Activated CD8-positive, alpha-beta T cell treated with anti-CD3 and anti-CD28 coated beads, Interleukin-2, amount 10 ng/mL, durations not matched to agents 7 days and 5 days (primary cell): ENCODE measurements at regions of chr3 and their contacts with region 1.

Region 1: GRCh38 chr3:187745201-187746058 is at the start of gene BCL6:
- DNase-seq: peak; percentile 94
- ATAC-seq: peak; percentile 42
- H3K4me3 Mint-ChIP-seq: peak within 1 kb of the TSS; percentile 100
- H3K27ac Mint-ChIP-seq: peak within 1 kb of the TSS; percentile 100
- H3K4me1 Mint-ChIP-seq: peaks cover 55% of the 10 kb centered on the region
- H3K27me3 Mint-ChIP-seq: no peaks in the 10 kb centered on the region
- total RNA-seq, gene BCL6: 11.8 to 12.6 TPM

Region 2: GRCh38 chr3:187958432-187959003 is 213.1 kb after region 1 on chr3:
- CTCF ChIA-PET with region 1: interaction called, 13 read pairs
- POLR2A ChIA-PET with region 1: interaction called, 14 read pairs
- DNase-seq: peak; percentile 78
- ATAC-seq: peak; percentile 95
- H3K4me3 Mint-ChIP-seq: peak overlapping the region; percentile 52
- H3K27ac Mint-ChIP-seq: peak overlapping the region; percentile 82
- H3K4me1 Mint-ChIP-seq: peaks cover 59% of the 10 kb centered on the region
- H3K27me3 Mint-ChIP-seq: no peaks in the 10 kb centered on the region

Region 3: DNA sequence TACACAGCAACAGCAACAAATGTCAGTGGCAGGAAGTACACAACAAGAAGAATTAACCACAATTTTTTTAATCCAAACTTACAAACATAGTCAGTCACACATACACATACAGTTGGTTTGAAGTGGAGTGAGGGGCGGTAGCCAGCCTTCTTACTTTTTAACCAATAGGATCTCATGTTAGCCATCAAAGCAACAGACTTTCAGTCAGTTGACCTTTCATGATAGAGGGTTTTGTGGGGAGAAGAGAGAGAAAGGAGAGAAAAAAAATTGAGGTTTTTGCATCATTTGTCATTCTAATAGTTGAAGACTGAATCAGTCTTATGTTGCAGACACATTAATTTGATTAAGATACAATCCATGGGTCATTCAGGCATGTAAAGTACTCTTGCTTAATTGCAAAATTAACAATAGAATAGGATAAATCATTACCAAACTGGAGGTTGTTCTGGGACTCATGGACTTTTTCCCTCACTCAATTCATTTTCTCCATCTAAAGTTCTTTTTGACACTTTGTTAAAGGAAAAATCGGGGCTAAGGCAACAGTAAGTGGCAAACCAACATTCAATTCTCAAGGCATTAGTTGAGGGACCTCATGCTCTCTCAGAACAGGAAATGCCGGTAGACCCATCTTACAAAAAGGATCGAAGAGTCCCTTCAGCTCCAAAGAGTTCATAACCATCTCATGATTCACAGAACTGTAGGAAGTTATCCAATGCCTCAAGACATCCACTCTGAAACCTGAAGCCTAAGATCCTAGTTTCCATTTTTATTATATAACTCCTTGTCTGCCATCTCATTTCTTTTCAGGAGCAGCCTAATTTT is 249.0 kb after region 1 on chr3:
- CTCF ChIA-PET with region 1: interaction called, 32 read pairs
- POLR2A ChIA-PET with region 1: interaction called, 52 read pairs
- DNase-seq: peak; percentile 67
- ATAC-seq: peak; percentile 82
- H3K4me3 Mint-ChIP-seq: peak overlapping the region; percentile 6
- H3K27ac Mint-ChIP-seq: peak overlapping the region; percentile 82
- H3K4me1 Mint-ChIP-seq: peaks cover 83% of the 10 kb centered on the region
- H3K27me3 Mint-ChIP-seq: no peaks in the 10 kb centered on the region

Region 4: GRCh38 chr3:188061133-188061532 is 315.7 kb after region 1 on chr3:
- CTCF ChIA-PET with region 1: interaction called, 12 read pairs
- POLR2A ChIA-PET with region 1: interaction called, 4 read pairs
- DNase-seq: peak; percentile 79
- ATAC-seq: peak; percentile 96
- H3K4me3 Mint-ChIP-seq: peak overlapping the region; percentile 24
- H3K27ac Mint-ChIP-seq: peak overlapping the region; percentile 83
- H3K4me1 Mint-ChIP-seq: peaks cover 31% of the 10 kb centered on the region
- H3K27me3 Mint-ChIP-seq: no peaks in the 10 kb centered on the region

Region 5: DNA sequence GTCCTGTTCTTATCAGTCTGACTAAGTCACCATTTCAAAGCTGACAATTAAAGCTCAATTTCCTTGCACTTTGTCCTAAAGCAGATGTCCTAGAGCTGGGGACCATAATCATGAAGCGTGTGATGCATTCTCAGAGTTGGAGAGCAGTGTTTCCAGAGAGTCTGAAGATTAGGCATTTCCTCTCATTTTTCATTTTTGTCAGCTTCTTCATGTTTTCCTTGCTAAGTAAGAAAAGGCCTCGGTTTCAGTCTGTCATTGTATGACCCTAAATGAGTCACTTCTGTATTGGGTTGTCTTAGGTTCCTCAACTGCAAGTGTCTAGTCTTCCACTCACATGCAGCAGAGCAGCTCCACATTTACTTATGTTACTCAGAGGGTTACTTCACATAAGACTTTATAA is 1169.1 kb after region 1 on chr3:
- CTCF ChIA-PET with region 1: interaction called, 76 read pairs
- POLR2A ChIA-PET with region 1: interaction called, 12 read pairs
- DNase-seq: no peak
- ATAC-seq: peak; percentile 51
- H3K4me3 Mint-ChIP-seq: no peak overlapping the region
- H3K27ac Mint-ChIP-seq: peak overlapping the region; percentile 76
- H3K4me1 Mint-ChIP-seq: peaks cover 41% of the 10 kb centered on the region
- H3K27me3 Mint-ChIP-seq: no peaks in the 10 kb centered on the region